ENCODE measurements at regions of chr11 and their contacts with region 1.

Region 1: GRCh38 chr11:64723117-64723906 is at the start of gene NRXN2:
- DNase-seq: no peak
- H3K4me3 ChIP-seq: peak within 1 kb of the TSS; percentile 65
- CTCF ChIP-seq: peak; percentile 97

Region 2: DNA sequence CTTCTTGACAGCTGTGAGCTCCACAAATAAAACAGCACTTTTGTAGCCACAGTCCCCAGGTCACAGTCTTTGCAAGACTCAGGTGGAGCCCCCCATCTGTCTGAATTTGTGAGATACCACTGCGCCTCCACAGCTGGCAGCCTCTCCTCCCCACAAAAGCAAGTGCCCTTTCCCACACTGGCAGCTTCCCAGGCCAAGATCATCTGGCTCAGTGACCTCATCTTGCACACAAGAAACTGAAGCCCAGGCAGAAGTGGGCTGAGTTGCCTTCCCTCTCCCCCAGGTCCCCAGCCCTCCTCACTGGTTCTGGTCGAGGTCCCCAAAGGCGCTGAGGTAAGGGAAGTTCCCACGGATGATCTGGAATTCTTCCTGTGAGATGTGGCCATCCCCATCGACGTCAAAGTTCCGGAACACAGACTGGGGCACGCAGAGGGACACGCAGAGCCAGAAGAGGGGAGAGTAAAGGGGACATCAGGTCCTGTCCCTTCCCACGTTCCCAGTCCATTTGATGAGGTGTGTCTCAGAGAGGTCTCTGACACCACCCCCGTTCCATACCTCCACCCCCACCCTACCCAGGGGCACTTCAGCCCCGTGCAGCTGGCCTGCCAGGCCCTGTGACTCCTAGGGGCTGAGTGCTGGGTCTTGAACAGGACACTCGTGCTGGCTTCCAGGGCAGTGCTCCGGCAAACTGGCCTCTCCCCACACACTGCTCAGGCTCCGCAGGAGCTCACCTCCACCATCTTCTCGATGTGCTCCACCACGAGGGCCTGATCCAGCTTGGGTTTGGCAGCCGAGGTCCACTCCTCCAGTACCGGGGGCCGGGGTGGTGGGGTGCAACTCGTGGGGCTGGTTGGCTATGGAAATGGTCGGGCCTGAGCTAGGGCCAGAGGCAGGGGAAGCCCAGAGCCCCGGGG is 11.8 kb after region 1 on chr11:
- CTCF ChIA-PET with region 1: interaction called, 12 read pairs
- POLR2A ChIA-PET with region 1: no interaction called
- DNase-seq: no peak
- H3K4me3 ChIP-seq: no peak overlapping the region
- CTCF ChIP-seq: no peak

Region 3: DNA sequence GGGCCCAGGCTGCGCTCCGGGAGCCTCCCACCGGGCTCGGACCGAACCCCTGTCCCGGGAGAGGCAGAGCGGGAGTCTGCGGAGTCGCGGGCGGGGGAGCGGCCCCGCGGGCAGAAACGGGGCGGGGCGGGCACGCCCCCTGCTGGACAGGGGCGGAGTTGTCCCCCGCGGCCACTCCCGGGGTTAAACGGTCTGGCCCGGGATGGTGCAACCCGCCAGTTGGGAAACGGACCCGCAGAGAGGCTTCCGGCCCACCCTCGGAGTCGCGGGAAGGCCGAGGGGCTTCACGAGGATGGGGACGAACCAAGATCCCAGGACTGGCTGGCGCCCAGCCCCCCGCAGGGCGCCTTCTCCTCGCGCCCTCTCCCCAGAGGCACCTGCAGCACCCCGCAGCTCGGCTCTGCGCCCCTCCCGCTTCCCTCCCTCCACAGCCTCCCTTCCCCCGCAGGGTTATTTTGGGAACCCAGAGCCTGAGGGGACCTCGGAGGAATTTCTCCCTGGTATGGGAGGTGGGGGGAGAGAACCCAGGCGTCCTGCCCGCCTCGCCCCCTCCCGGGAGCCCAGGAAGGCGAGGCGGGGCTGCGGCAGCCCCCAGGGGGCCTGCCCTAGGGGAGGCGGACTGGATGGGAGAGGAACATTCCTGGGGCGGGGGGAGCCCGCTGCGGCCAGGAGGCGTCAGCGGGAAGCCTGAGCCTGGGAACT is 19.7 kb after region 1 on chr11:
- CTCF ChIA-PET with region 1: interaction called, 19 read pairs
- POLR2A ChIA-PET with region 1: no interaction called
- DNase-seq: no peak
- H3K4me3 ChIP-seq: peak overlapping the region; percentile 50
- CTCF ChIP-seq: peak; percentile 81